GM23248 (cell line): ENCODE measurements at regions of chr4 and their contacts with region 1.

Region 1: GRCh38 chr4:55853484-55854046 is at the start of gene EXOC1:
- DNase-seq: peak; percentile 99
- H3K4me3 ChIP-seq: peak within 1 kb of the TSS; percentile 98
- H3K27ac ChIP-seq: peak within 1 kb of the TSS; percentile 70
- H3K4me1 ChIP-seq: peaks cover 11% of the 10 kb centered on the region
- H3K27me3 ChIP-seq: no peaks in the 10 kb centered on the region
- total RNA-seq, gene EXOC1: 44.7 and 46.9 TPM in 2 replicates

Region 2: DNA sequence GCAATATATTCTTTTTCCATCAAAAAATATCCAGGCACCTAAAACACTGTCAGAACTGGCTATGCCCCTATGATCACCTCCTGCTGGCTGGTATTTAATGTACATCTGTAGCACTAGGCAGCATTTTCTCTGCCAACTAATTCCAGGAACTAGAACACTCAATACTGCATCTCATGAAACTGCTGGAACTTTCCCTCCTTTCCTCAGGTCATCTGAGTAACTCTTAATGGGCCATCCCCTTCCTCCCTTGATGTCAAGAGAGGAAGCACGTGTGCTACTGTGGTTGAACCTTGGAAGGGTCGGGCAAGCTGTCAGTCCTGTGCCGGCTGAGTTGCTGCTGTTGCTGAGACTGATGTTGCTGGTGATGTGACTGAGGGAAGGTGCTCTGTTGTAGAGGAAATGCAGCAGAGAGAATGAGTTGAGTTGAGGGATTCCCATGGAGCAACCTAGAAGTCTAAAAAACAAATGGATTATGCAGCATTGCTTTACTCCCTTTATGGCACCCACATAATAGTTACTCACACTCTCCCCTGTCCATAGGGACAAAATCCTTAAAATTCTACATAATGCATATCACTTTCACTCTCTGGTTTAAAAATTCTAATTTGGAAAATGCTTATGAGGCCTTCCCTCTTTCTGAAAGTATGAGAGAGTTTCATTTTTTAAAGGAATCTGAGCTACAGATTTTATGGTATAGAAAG is 418.3 kb before region 1 on chr4:
- in situ Hi-C with region 1: loop called (anchors 25 kb)
- DNase-seq: peak; percentile 66
- H3K4me3 ChIP-seq: no peak overlapping the region
- H3K27ac ChIP-seq: no peak overlapping the region
- H3K4me1 ChIP-seq: peaks cover 4% of the 10 kb centered on the region; the same call in 1 of the 2 replicates
- H3K27me3 ChIP-seq: no peaks in the 10 kb centered on the region

Region 3: GRCh38 chr4:55736605-55737183 is 116.9 kb before region 1 on chr4:
- in situ Hi-C with region 1: no loop called
- DNase-seq: peak; percentile 32
- H3K4me3 ChIP-seq: no peak overlapping the region
- H3K27ac ChIP-seq: no peak overlapping the region
- H3K4me1 ChIP-seq: no peaks in the 10 kb centered on the region
- H3K27me3 ChIP-seq: peaks cover 12% of the 10 kb centered on the region

Region 4: GRCh38 chr4:56106180-56107147 is 252.9 kb after region 1 on chr4:
- in situ Hi-C with region 1: no loop called
- DNase-seq: no peak
- H3K4me3 ChIP-seq: no peak overlapping the region
- H3K27ac ChIP-seq: no peak overlapping the region
- H3K4me1 ChIP-seq: no peaks in the 10 kb centered on the region
- H3K27me3 ChIP-seq: peaks cover 29% of the 10 kb centered on the region